ENCODE measurements at regions of chr2 and their contacts with region 1.

Region 1: GRCh38 chr2:96072746-96073145 is 38.0 kb upstream of the GPAT2 start:
- DNase-seq: no peak
- ATAC-seq: no peak

Region 2: GRCh38 chr2:95264624-95265023 is 808.1 kb before region 1 on chr2:
- intact Hi-C with region 1: no loop called
- DNase-seq: no peak
- ATAC-seq: no peak

Region 3: GRCh38 chr2:95526360-95527341 is 546.1 kb before region 1 on chr2:
- intact Hi-C with region 1: no loop called
- DNase-seq: peak; percentile 73
- ATAC-seq: peak; percentile 91 to 99

Region 4: GRCh38 chr2:96116879-96117697 is 44.3 kb after region 1 on chr2:
- intact Hi-C with region 1: loop called in 1 of 2 experiments (anchors 5 kb)
- DNase-seq: peak; percentile 51
- ATAC-seq: peak; percentile 88 to 92

Measured in left cardiac atrium (tissue), 4 donors.